K562 (cell line): ENCODE measurements at regions of chr6 and their contacts with region 1.

Region 1: DNA sequence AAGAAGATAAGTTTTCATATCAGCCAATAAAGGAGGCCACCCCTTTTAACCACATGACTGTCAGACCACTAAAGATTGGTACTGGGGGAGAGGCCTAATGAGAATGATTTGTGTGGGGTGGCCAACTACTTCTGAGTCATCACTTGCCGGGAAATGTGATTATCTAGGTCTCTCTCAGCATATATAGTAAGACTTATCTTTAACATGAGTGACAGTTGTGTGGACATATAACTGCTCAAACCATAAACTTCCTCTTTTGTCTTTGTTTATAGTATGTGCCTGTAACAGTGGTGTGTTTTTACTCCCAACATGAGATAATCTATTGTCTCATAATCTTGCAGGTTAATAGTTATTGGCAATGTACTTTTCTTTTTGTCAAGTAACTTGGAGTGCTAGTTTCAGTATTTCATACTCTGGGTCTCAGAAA is 312.4 kb downstream of the CDKAL1 start:
- DNase-seq: peak; percentile 28 to 88 (median 56)
- ATAC-seq: peak; percentile 99
- H3K4me3 ChIP-seq: no peak overlapping the region
- H3K27ac ChIP-seq: peak overlapping the region; percentile 9; the same call in 1 of the 3 replicates
- H3K4me1 ChIP-seq: peaks cover 0 to 4% of the 10 kb centered on the region in 2 experiments; a peak in 3 of 5 replicates
- H3K27me3 ChIP-seq: no peaks in the 10 kb centered on the region
- CTCF ChIP-seq: no peak
- EP300 ChIP-seq: peak; percentile 95
- POLR2A ChIP-seq: no peak
- RAD21 ChIP-seq: no peak; a peak in 1 of 4 replicates

Region 2: DNA sequence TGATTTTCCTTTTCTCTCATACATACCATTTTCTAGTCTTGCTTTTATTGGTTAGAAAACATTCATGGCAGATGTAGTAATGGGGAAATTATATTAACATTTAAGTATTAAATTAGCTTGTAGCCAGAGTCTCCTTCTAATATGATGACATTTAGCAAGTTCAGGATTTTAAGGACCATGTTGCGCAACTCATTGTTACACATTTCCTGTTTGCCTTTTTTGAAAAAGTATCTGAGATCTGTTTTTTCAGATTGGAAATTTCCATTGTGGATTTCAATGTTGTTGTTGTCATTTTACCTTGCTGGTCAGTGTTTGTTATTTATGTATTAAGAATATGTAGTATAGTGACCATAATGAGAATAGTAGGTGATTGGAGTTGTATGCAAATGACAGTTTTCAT is 273.7 kb before region 1 on chr6:
- CTCF ChIA-PET with region 1: no interaction called
- POLR2A ChIA-PET with region 1: no interaction called
- in situ Hi-C with region 1: no loop called
- intact Hi-C with region 1: loop called (anchors 10 kb)
- DNase-seq: no peak
- ATAC-seq: no peak
- H3K4me3 ChIP-seq: no peak overlapping the region
- H3K27ac ChIP-seq: no peak overlapping the region
- H3K4me1 ChIP-seq: peaks cover 0 to 14% of the 10 kb centered on the region in 2 experiments; a peak in 3 of 5 replicates
- H3K27me3 ChIP-seq: no peaks in the 10 kb centered on the region
- CTCF ChIP-seq: no peak
- EP300 ChIP-seq: peak; percentile 11; the same call in 1 of the 2 replicates
- POLR2A ChIP-seq: no peak
- RAD21 ChIP-seq: 0 out of 4 replicates have a peak, but pooled peaks of 1 of the 2 experiments have one; percentile 8